ENCODE measurements at regions of chr3 and their contacts with region 1.

Region 1: GRCh38 chr3:195612075-195612800 is 28.5 kb upstream of the APOD start:
- DNase-seq: peak in 1 of 4 experiments; percentile 14
- ATAC-seq: no peak
- H3K4me3 ChIP-seq: no peak overlapping the region
- H3K27ac ChIP-seq: no peak overlapping the region
- H3K4me1 ChIP-seq: no peaks in the 10 kb centered on the region; a peak in 1 of 5 replicates
- H3K27me3 ChIP-seq: peaks cover 5 to 20% of the 10 kb centered on the region in 2 experiments; a peak in 3 of 5 replicates
- CTCF ChIP-seq: no peak
- EP300 ChIP-seq: no peak
- POLR2A ChIP-seq: no peak
- RAD21 ChIP-seq: no peak

Region 2: GRCh38 chr3:195467641-195468390 is 144.4 kb before region 1 on chr3:
- CTCF ChIA-PET with region 1: no interaction called
- POLR2A ChIA-PET with region 1: no interaction called
- in situ Hi-C with region 1: no loop called
- intact Hi-C with region 1: no loop called
- DNase-seq: no peak
- ATAC-seq: no peak
- H3K4me3 ChIP-seq: no peak overlapping the region
- H3K27ac ChIP-seq: no peak overlapping the region
- H3K4me1 ChIP-seq: no peaks in the 10 kb centered on the region
- H3K27me3 ChIP-seq: no peaks in the 10 kb centered on the region
- CTCF ChIP-seq: no peak
- EP300 ChIP-seq: no peak
- POLR2A ChIP-seq: no peak
- RAD21 ChIP-seq: no peak

Region 3: DNA sequence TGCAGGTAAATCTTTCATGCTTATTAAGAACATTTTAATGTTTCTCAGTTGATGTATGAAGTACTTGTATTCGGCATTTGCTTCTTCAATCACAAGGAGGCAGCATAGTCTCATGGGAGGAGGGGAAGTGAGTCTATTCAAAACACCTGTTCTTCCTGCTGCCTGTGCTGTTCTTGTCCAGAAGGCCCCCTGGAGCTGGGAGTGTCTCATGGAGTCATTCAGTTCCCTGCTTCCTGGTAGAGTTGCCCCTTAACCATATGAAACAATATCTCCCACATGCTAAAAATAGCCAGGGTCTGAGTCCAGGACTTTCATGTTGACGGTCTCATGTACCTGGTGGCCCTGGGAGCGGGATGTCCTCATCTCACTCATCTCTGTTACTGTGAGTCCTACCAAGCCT is 53.6 kb before region 1 on chr3:
- CTCF ChIA-PET with region 1: no interaction called
- POLR2A ChIA-PET with region 1: no interaction called
- in situ Hi-C with region 1: no loop called
- intact Hi-C with region 1: loop called (anchors 5 kb)
- DNase-seq: peak; percentile 41 to 67 (median 54)
- ATAC-seq: peak; percentile 79
- H3K4me3 ChIP-seq: no peak overlapping the region
- H3K27ac ChIP-seq: no peak overlapping the region
- H3K4me1 ChIP-seq: peaks cover 0 to 3% of the 10 kb centered on the region in 2 experiments; a peak in 1 of 5 replicates
- H3K27me3 ChIP-seq: peaks cover 4 to 7% of the 10 kb centered on the region in 2 experiments; a peak in 4 of 5 replicates
- CTCF ChIP-seq: peak; percentile 63 to 86 (median 69)
- EP300 ChIP-seq: no peak
- POLR2A ChIP-seq: no peak
- RAD21 ChIP-seq: peak; percentile 78 to 89

Region 4: GRCh38 chr3:195574497-195575304 is 37.5 kb before region 1 on chr3:
- CTCF ChIA-PET with region 1: no interaction called
- POLR2A ChIA-PET with region 1: no interaction called
- in situ Hi-C with region 1: no loop called
- intact Hi-C with region 1: loop called (anchors 5 kb)
- DNase-seq: no peak
- ATAC-seq: no peak
- H3K4me3 ChIP-seq: no peak overlapping the region
- H3K27ac ChIP-seq: no peak overlapping the region
- H3K4me1 ChIP-seq: peaks cover 4 to 7% of the 10 kb centered on the region in 2 experiments; a peak in 3 of 5 replicates
- H3K27me3 ChIP-seq: peaks cover 28 to 51% of the 10 kb centered on the region in 2 experiments
- CTCF ChIP-seq: no peak
- EP300 ChIP-seq: no peak
- POLR2A ChIP-seq: no peak
- RAD21 ChIP-seq: no peak

Region 5: DNA sequence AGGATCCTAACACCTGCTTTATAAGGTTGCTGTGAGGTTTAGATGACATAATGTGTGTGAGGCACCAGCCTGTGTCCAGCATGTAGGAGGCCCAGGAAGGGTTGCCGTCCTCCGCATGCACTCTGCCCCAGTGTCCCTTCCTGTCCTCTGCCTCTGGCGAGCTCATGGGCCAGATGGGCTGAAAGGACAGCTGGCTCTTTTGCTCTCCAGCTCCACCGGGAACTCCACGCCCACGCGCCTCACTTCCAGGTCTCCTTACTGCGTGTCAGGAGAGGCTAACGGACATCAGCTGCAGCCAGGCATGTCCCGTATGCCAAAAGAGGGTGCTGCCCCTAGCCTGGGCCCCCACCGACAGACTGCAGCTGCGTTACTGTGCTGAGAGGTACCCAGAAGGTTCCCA is 120.7 kb after region 1 on chr3:
- CTCF ChIA-PET with region 1: no interaction called
- POLR2A ChIA-PET with region 1: no interaction called
- in situ Hi-C with region 1: no loop called
- intact Hi-C with region 1: no loop called
- DNase-seq: no peak
- ATAC-seq: peak; percentile 17; the same call in 1 of the 3 replicates
- H3K4me3 ChIP-seq: no peak overlapping the region
- H3K27ac ChIP-seq: no peak overlapping the region
- H3K4me1 ChIP-seq: no peaks in the 10 kb centered on the region; a peak in 1 of 5 replicates
- H3K27me3 ChIP-seq: peaks cover 42 to 57% of the 10 kb centered on the region in 2 experiments
- CTCF ChIP-seq: no peak
- EP300 ChIP-seq: no peak
- POLR2A ChIP-seq: no peak
- RAD21 ChIP-seq: no peak

Measured in K562 (cell line).